Caco-2 (cell line): ENCODE measurements at regions of chr16 and their contacts with region 1.

Region 1: DNA sequence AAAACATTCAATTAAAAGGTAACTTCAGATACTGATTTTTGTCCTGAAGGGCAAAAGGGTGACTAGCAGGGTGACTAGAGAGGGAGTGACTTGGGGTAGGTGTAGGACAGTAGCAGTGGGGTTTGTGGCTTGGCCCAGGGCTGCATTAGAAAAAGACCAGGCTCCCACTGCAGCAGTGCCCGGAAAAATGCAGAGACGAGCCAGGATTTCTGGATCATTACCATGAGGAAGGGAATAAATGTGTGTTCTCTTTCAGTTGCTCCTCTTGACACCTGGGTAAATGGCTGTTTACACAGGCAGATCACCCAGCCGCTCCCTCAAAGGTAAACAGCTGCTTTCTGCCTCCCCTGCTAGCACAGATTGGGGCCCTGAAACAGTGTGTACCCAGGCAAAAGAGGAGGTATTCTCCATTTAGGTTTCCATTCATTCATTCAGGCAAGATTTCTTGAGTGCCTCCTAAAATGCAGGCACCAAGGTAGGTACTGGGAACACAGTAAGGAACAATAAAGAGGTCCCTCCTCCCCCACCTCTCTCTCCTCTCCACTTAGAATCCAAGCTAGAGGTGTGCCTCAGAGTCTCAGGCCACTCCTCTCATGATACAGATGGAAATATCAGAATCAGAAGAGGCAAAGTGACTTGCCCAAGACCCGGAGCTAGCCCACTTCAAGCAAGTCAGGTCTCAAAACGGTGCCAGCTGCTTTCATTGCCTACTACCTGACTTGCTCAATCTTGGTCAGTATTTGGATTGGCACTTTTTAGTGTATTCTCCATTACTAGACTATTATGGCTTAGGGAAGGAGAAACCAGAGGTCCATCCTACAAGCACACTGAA is 15.2 kb upstream of the TOX3 start:
- DNase-seq: peak; percentile 40 to 62
- H3K4me3 ChIP-seq: no peak overlapping the region
- H3K4me3 Mint-ChIP-seq: peak overlapping the region; percentile 43
- H3K27ac Mint-ChIP-seq: peak overlapping the region; percentile 78
- H3K4me1 ChIP-seq: peaks cover 61% of the 10 kb centered on the region
- H3K4me1 Mint-ChIP-seq: peaks cover 47% of the 10 kb centered on the region
- H3K27me3 ChIP-seq: no peaks in the 10 kb centered on the region
- H3K27me3 Mint-ChIP-seq: no peaks in the 10 kb centered on the region
- CTCF ChIP-seq: no peak

Region 2: GRCh38 chr16:52515068-52515671 is 47.0 kb before region 1 on chr16:
- CTCF ChIA-PET with region 1: no interaction called
- POLR2A ChIA-PET with region 1: no interaction called
- intact Hi-C with region 1: no loop called
- DNase-seq: peak in 1 of 2 experiments; percentile 31
- H3K4me3 ChIP-seq: no peak overlapping the region
- H3K4me3 Mint-ChIP-seq: no peak overlapping the region
- H3K27ac Mint-ChIP-seq: no peak overlapping the region
- H3K4me1 ChIP-seq: no peaks in the 10 kb centered on the region
- H3K4me1 Mint-ChIP-seq: no peaks in the 10 kb centered on the region
- H3K27me3 ChIP-seq: no peaks in the 10 kb centered on the region
- H3K27me3 Mint-ChIP-seq: no peaks in the 10 kb centered on the region
- CTCF ChIP-seq: no peak

Region 3: DNA sequence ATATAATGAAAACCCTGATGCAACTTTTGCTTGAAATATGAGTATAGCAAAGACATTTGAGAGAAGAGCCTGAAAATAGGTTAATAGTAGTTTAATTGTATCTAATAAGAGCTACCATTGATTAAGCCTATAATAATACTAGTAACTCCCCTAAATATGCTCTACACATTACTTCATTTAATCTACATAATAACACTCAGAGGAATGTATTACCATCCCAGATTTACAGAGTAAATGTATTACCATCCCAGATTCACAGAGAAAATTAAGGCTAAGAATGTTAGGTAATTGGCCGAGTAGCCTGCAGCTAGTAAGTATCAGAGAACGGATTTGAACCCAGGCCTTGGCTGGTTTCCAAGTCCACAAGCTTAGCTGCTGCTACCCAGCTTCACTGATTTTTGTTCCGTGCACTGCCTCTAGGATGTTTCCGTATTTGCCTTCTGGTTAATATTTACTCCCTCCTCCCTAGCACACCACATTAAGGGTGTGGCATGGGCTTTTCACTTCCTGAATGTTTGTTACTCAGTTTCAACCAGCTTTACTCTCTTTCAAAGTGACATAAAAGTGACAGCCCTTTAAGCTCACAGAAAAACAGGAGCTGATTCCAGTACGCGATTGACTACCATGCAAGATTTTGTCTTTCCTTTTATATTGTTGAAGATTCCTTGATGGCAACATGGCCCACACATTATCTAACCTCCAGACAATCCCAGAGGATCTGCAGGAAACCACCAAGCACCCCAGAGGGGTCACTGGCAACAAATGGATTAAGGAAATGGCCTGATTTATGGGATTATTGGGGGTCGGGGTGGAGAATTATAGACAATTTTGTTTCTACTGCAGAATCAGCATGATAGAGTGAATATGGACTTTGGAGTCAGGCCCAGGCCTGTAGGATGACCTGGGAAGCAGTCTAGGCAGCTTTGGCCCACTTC is 11.5 kb after region 1 on chr16:
- CTCF ChIA-PET with region 1: interaction called, 3 read pairs
- POLR2A ChIA-PET with region 1: interaction called, 3 read pairs
- intact Hi-C with region 1: loop called (anchors 1 kb)
- DNase-seq: peak; percentile 65 to 68
- H3K4me3 ChIP-seq: no peak overlapping the region
- H3K4me3 Mint-ChIP-seq: no peak overlapping the region
- H3K27ac Mint-ChIP-seq: peak overlapping the region; percentile 72
- H3K4me1 ChIP-seq: peaks cover 30% of the 10 kb centered on the region
- H3K4me1 Mint-ChIP-seq: peaks cover 20% of the 10 kb centered on the region
- H3K27me3 ChIP-seq: no peaks in the 10 kb centered on the region
- H3K27me3 Mint-ChIP-seq: no peaks in the 10 kb centered on the region
- CTCF ChIP-seq: peak in 1 of 2 experiments; percentile 14

Region 4: GRCh38 chr16:52581530-52581929 is 19.4 kb after region 1 on chr16:
- CTCF ChIA-PET with region 1: no interaction called
- POLR2A ChIA-PET with region 1: no interaction called
- intact Hi-C with region 1: loop called (anchors 2 kb)
- DNase-seq: peak in 1 of 2 experiments; percentile 41
- H3K4me3 ChIP-seq: no peak overlapping the region
- H3K4me3 Mint-ChIP-seq: no peak overlapping the region
- H3K27ac Mint-ChIP-seq: no peak overlapping the region
- H3K4me1 ChIP-seq: peaks cover 10% of the 10 kb centered on the region
- H3K4me1 Mint-ChIP-seq: peaks cover 13% of the 10 kb centered on the region
- H3K27me3 ChIP-seq: no peaks in the 10 kb centered on the region
- H3K27me3 Mint-ChIP-seq: no peaks in the 10 kb centered on the region
- CTCF ChIP-seq: peak; percentile 57 to 80

Region 5: GRCh38 chr16:52597580-52598483 is 35.7 kb after region 1 on chr16:
- CTCF ChIA-PET with region 1: no interaction called
- POLR2A ChIA-PET with region 1: no interaction called
- intact Hi-C with region 1: no loop called
- DNase-seq: peak in 1 of 2 experiments; percentile 32
- H3K4me3 ChIP-seq: no peak overlapping the region
- H3K4me3 Mint-ChIP-seq: no peak overlapping the region
- H3K27ac Mint-ChIP-seq: no peak overlapping the region
- H3K4me1 ChIP-seq: no peaks in the 10 kb centered on the region
- H3K4me1 Mint-ChIP-seq: peaks cover 7% of the 10 kb centered on the region
- H3K27me3 ChIP-seq: no peaks in the 10 kb centered on the region
- H3K27me3 Mint-ChIP-seq: no peaks in the 10 kb centered on the region
- CTCF ChIP-seq: no peak

Region 6: GRCh38 chr16:52611817-52612673 is 49.9 kb after region 1 on chr16:
- CTCF ChIA-PET with region 1: no interaction called
- POLR2A ChIA-PET with region 1: no interaction called
- intact Hi-C with region 1: loop called (anchors 1 kb)
- DNase-seq: peak; percentile 63 to 78
- H3K4me3 ChIP-seq: peak overlapping the region; percentile 35
- H3K4me3 Mint-ChIP-seq: peak overlapping the region; percentile 71
- H3K27ac Mint-ChIP-seq: peak overlapping the region; percentile 74
- H3K4me1 ChIP-seq: peaks cover 35% of the 10 kb centered on the region
- H3K4me1 Mint-ChIP-seq: peaks cover 34% of the 10 kb centered on the region
- H3K27me3 ChIP-seq: no peaks in the 10 kb centered on the region
- H3K27me3 Mint-ChIP-seq: no peaks in the 10 kb centered on the region
- CTCF ChIP-seq: no peak

Region 7: GRCh38 chr16:52634104-52634503 is 72.0 kb after region 1 on chr16:
- CTCF ChIA-PET with region 1: no interaction called
- POLR2A ChIA-PET with region 1: no interaction called
- intact Hi-C with region 1: no loop called
- DNase-seq: no peak
- H3K4me3 ChIP-seq: no peak overlapping the region
- H3K4me3 Mint-ChIP-seq: no peak overlapping the region
- H3K27ac Mint-ChIP-seq: no peak overlapping the region
- H3K4me1 ChIP-seq: no peaks in the 10 kb centered on the region
- H3K4me1 Mint-ChIP-seq: no peaks in the 10 kb centered on the region
- H3K27me3 ChIP-seq: no peaks in the 10 kb centered on the region
- H3K27me3 Mint-ChIP-seq: no peaks in the 10 kb centered on the region
- CTCF ChIP-seq: no peak